ENCODE measurements at regions of chr10 and their contacts with region 1.

Region 1: GRCh38 chr10:44864637-44865288 is 46.4 kb upstream of the TMEM72 start:
- DNase-seq: peak; percentile 91 to 98
- H3K4me3 ChIP-seq: peak overlapping the region; percentile 46
- H3K4me3 Mint-ChIP-seq: peak overlapping the region; percentile 84
- H3K27ac Mint-ChIP-seq: peak overlapping the region; percentile 77
- H3K4me1 ChIP-seq: peaks cover 15% of the 10 kb centered on the region
- H3K4me1 Mint-ChIP-seq: peaks cover 11% of the 10 kb centered on the region
- H3K27me3 ChIP-seq: peaks cover 4% of the 10 kb centered on the region; the same call in 1 of the 2 replicates
- H3K27me3 Mint-ChIP-seq: peaks cover 34% of the 10 kb centered on the region
- CTCF ChIP-seq: peak; percentile 98 to 99

Region 2: GRCh38 chr10:44878706-44879530 is 14.2 kb after region 1 on chr10:
- CTCF ChIA-PET with region 1: interaction called, 5 read pairs
- POLR2A ChIA-PET with region 1: interaction called, 3 read pairs
- intact Hi-C with region 1: loop called (anchors 2 kb)
- DNase-seq: peak; percentile 86 to 88
- H3K4me3 ChIP-seq: peak overlapping the region; percentile 20
- H3K4me3 Mint-ChIP-seq: peak overlapping the region; percentile 77
- H3K27ac Mint-ChIP-seq: no peak overlapping the region
- H3K4me1 ChIP-seq: no peaks in the 10 kb centered on the region
- H3K4me1 Mint-ChIP-seq: no peaks in the 10 kb centered on the region
- H3K27me3 ChIP-seq: peaks cover 6% of the 10 kb centered on the region
- H3K27me3 Mint-ChIP-seq: peaks cover 33% of the 10 kb centered on the region
- CTCF ChIP-seq: peak in 1 of 2 experiments; percentile 59

Region 3: DNA sequence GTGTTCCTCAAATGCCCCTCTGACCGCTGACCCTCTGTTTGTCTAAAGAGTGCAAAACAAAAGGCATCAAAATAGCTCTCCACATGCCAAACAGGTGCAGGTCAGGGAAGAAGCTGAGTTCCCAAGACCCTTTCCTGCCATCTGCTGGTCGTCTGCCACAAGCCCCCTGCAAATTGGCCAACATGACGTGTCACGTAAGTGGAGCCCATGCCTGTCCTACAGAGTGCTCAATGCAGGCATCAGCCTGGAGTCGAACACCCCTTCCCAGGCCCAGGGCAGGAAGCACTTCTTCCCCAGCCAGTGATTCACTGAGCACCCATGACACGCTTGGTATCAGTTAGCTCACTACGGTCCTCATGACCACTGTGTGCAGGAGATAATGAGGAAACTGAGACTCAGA is 60.5 kb after region 1 on chr10:
- CTCF ChIA-PET with region 1: interaction called, 51 read pairs
- POLR2A ChIA-PET with region 1: no interaction called
- intact Hi-C with region 1: loop called (anchors 1 kb)
- DNase-seq: peak; percentile 73 to 78
- H3K4me3 ChIP-seq: no peak overlapping the region
- H3K4me3 Mint-ChIP-seq: no peak overlapping the region
- H3K27ac Mint-ChIP-seq: no peak overlapping the region
- H3K4me1 ChIP-seq: peaks cover 10% of the 10 kb centered on the region; the same call in 1 of the 2 replicates
- H3K4me1 Mint-ChIP-seq: no peaks in the 10 kb centered on the region
- H3K27me3 ChIP-seq: no peaks in the 10 kb centered on the region
- H3K27me3 Mint-ChIP-seq: peaks cover 13% of the 10 kb centered on the region
- CTCF ChIP-seq: peak; percentile 69 to 89

Region 4: DNA sequence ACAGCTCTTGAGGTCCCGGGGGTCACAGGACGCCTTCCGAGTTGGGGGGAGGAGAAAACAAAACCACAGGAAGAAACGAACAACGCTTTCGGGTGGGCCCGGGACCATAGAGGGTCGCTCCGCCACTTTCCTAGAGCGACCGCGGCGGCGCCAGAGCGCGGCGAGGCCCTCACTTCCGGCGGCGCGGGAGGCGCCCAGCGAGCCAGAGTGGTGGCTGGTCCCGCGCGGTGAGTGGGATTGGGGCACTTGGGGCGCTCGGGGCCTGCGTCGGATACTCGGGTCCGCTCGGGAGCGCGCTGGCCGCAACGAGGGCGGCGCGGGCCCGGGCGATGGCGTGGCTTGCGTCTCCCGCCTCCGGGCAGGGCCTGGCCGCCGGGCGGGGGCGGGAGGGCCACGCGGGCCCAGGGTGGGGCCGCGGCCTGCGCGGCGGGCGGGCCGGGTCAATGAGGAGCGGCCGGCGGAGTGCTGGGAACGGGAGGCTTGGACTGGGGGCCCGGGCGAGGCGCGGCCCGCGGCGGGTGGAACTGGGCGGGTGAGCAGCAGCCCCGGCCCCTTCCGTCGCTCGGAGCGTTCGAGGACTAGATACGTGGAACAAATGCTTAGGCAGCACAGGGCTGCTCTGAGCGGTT is 136.1 kb after region 1 on chr10 and contains the start of gene ZNF22:
- CTCF ChIA-PET with region 1: interaction called, 4 read pairs
- POLR2A ChIA-PET with region 1: no interaction called
- intact Hi-C with region 1: loop called (anchors 5 kb)
- DNase-seq: peak; percentile 86 to 91
- H3K4me3 ChIP-seq: peak within 1 kb of the TSS; percentile 84
- H3K4me3 Mint-ChIP-seq: peak within 1 kb of the TSS; percentile 82
- H3K27ac Mint-ChIP-seq: peak within 1 kb of the TSS; percentile 94
- H3K4me1 ChIP-seq: peaks cover 31% of the 10 kb centered on the region
- H3K4me1 Mint-ChIP-seq: peaks cover 28% of the 10 kb centered on the region
- H3K27me3 ChIP-seq: no peaks in the 10 kb centered on the region
- H3K27me3 Mint-ChIP-seq: no peaks in the 10 kb centered on the region
- CTCF ChIP-seq: peak in 1 of 2 experiments; percentile 35
- total RNA-seq, gene ZNF22: 46.5 and 60.8 TPM in 2 replicates